ENCODE measurements at regions of chr3 and their contacts with region 1.

Region 1: GRCh38 chr3:158727206-158728060 is 4.8 kb downstream of the RARRES1 start:
- DNase-seq: peak in 1 of 2 donors; percentile 79
- H3K4me3 ChIP-seq: peak overlapping the region in 1 of 2 donors; percentile 37
- H3K27ac ChIP-seq: peak overlapping the region; percentile 72 to 80
- H3K4me1 ChIP-seq: peaks cover 7 to 33% of the 10 kb centered on the region in 2 donors
- H3K27me3 ChIP-seq: no peaks in the 10 kb centered on the region
- CTCF ChIP-seq: peak; percentile 71 to 84 (median 82)

Region 2: DNA sequence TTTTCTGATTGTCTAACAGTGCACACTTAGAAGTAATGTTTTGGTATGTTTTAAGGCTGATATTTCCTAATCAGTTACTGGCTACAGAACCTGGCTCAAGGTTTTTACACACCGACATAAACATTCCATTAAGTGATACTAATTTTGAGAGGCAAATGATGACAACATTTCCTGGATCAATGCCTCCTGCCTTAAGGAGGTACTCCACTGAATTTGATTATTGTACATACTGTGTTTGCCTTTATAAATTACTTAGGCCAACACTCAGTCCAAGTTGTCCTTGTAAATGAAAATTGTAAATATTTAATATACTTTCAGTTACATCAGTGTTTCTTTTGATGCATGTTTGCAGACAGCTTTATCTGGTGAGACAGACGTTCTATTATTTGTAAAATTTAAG is 30.8 kb before region 1 on chr3:
- intact Hi-C with region 1: loop called (anchors 5 kb)
- DNase-seq: no peak
- H3K4me3 ChIP-seq: no peak overlapping the region
- H3K27ac ChIP-seq: no peak overlapping the region
- H3K4me1 ChIP-seq: no peaks in the 10 kb centered on the region
- H3K27me3 ChIP-seq: no peaks in the 10 kb centered on the region
- CTCF ChIP-seq: no peak

Region 3: DNA sequence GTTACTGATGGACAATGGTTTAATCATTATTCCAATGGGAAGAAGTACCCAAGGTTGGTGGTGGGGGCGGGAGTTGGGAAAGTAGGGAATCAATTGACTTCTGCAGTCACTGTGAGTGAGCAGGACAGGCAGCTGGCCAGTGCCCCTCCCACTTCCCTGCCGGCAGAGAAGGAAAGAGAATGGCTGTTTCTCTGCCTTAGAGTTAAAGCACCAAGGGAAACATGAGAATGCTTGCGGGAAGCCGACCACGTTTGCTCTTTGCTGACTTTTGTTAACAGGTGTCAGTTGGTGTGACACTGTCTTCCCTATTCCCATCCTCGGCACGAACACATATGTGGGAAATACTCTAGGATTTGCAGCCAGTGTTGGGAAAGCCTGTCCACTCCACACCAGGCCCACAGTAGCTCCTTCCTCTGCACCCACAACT is 40.9 kb after region 1 on chr3:
- intact Hi-C with region 1: loop called (anchors 2 kb)
- DNase-seq: peak in 1 of 2 donors; percentile 74
- H3K4me3 ChIP-seq: peak overlapping the region in 1 of 2 donors; percentile 44
- H3K27ac ChIP-seq: peak overlapping the region in 1 of 2 donors; percentile 51
- H3K4me1 ChIP-seq: peaks cover 0 to 17% of the 10 kb centered on the region in 2 donors
- H3K27me3 ChIP-seq: no peaks in the 10 kb centered on the region
- CTCF ChIP-seq: no peak

Region 4: DNA sequence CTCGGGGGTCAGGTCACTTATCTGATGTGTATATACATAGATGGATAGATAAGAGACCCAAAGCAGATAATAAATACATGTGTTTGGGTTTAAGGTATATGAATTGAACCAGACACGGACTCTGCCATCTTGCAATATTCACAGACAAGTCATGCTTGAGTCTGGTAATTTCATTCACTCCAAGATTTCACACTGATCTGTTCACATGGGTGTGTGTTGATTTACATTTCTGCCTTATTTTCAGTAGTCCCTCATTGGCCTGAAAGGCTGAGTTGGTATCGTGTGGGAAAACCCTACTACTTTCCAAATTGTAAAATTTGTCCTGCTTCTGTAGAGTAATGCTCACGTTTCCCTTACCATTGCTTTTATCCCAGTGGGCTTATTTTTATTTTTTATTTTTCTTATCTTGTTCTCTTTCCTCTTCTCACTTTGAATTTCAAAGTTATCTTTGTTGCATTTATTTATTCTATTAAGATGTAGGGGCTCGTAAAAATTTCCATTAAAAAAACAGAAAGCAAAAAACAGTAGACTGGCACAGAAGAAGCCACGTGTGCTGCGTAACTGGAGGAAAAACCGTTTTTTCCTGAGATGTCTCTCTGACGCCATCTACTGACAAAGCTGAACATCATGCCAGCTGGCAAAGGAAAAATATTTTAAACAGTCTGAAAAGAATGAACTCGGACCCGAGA is 63.6 kb after region 1 on chr3:
- intact Hi-C with region 1: loop called (anchors 1 kb)
- DNase-seq: no peak
- H3K4me3 ChIP-seq: peak overlapping the region; percentile 15 to 42
- H3K27ac ChIP-seq: no peak overlapping the region
- H3K4me1 ChIP-seq: no peaks in the 10 kb centered on the region
- H3K27me3 ChIP-seq: no peaks in the 10 kb centered on the region
- CTCF ChIP-seq: peak; percentile 67 to 87 (median 78)